ENCODE measurements at regions of chr3 and their contacts with region 1.

Region 1: DNA sequence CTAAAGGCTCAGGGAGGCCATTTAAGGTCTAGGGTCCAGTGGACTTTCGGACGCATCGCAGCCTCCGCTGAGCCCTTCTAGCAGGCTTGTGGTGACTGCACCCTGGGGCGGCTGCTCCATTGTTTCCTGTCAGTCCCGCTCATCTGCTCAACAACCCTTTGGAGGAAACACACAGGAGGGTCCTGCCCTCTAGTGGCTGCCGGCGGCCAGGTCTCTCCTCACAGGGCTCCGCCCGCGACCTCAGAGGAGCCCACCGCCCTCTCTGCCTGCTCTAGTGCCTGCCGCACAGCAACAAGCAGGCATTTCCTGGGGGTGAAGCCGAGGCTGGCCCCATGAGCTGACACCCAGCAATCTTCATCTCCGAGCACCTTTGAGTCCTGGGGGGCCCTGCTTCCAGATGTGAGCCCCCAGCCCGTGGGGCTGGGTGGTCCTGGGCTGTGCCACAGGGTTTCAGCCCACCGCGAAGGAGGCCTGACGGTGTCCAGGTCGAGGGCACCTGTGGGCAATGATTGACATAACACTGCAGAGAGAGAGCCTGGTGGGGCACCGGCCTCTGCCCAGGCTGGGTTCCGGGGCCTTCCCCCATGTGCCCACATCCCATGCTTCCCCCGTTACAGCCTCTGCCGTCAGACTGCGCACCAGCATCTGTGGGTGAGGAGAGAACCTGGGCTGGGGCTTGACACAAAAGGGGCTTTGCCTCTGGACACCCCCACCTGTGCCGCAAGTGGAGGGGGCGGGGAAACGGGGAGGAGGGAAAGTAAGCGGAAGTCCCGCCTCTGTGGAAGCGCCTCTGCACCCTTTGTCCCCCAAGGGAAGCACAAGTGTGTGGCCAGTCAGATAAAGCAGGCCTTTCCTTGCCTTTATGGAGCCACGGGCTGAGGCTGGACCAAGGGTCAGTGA is 27.0 kb upstream of the SFMBT1 start:
- ATAC-seq: peak; percentile 79 to 95 (median 93)
- H3K4me3 ChIP-seq: no peak overlapping the region
- H3K27ac ChIP-seq: no peak overlapping the region
- H3K4me1 ChIP-seq: peaks cover 3 to 4% of the 10 kb centered on the region in 2 donors

Region 2: DNA sequence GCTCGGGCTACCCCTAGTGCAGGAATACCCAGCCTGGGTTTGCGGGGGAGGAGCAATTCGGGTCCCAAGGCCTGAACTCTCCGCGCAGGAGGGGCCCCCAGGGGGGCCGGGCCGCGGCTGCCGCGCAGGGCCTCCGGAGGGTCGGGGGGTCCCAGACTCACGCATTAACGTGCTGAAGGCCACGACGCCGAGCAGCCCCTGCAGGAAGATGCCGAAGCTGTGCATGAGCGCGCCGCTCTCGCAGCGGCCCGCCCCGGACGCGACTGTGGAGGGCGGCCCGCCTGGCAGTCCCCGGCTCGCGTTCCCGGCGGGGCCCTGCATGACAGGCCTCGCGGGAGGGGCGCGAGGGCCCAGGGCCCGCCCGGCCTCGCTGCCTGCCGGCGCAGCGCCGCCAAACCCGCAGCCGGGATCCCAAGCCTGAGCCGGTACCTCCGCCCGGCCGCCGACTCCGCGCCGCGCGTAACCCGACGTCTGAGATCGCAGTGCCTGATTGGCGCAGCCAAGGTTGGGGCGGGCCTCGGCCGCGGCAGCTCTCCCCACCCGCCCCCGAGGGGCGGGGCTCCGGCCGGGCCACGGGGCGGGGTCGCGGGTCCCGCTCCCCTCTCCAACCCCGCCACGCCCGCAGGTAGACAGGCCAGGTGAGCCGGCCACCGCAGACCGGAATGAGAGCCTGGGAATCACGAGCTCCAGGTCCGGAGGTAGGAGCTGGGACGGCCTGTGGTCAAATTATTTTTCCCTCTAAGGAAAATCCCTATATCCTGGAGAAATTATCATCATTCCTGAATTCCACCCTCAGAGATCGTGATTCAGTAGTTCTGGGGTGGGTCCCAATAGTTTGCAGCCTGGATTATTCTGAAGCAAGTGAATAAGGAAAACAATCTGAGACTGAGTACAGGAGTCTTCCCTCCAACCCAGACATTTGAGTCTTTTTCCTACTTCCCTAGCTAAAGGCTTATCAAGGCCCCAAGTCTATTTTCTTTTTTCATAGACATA is 175.5 kb before region 1 on chr3 and contains the start of gene STIMATE:
- in situ Hi-C with region 1: loop called in 1 of 9 experiments (anchors 25 kb)
- ATAC-seq: peak; percentile 94 to 99 (median 99)
- H3K4me3 ChIP-seq: peak within 1 kb of the TSS; percentile 55 to 90 (median 63)
- H3K27ac ChIP-seq: no peak within 1 kb of the TSS
- H3K4me1 ChIP-seq: peaks cover 9 to 12% of the 10 kb centered on the region in 2 donors
- total RNA-seq, gene STIMATE: 7.2 to 27.0 (median 13.3) TPM

Measured in motor neuron (in vitro differentiated cells).